Activated CD4-positive, alpha-beta memory T cell treated with anti-CD3 and anti-CD28 coated beads, Interleukin-2, amount 10 ng/mL, durations not matched to agents 7 days and 5 days (primary cell): ENCODE measurements at regions of chr3 and their contacts with region 1.

Region 1: GRCh38 chr3:113019182-113020137 is 28.7 kb downstream of the GTPBP8 start:
- DNase-seq: peak; percentile 86
- H3K4me3 Mint-ChIP-seq: peak overlapping the region; percentile 80
- H3K27ac Mint-ChIP-seq: peak overlapping the region; percentile 84
- H3K4me1 Mint-ChIP-seq: peaks cover 44% of the 10 kb centered on the region
- H3K27me3 Mint-ChIP-seq: no peaks in the 10 kb centered on the region

Region 2: DNA sequence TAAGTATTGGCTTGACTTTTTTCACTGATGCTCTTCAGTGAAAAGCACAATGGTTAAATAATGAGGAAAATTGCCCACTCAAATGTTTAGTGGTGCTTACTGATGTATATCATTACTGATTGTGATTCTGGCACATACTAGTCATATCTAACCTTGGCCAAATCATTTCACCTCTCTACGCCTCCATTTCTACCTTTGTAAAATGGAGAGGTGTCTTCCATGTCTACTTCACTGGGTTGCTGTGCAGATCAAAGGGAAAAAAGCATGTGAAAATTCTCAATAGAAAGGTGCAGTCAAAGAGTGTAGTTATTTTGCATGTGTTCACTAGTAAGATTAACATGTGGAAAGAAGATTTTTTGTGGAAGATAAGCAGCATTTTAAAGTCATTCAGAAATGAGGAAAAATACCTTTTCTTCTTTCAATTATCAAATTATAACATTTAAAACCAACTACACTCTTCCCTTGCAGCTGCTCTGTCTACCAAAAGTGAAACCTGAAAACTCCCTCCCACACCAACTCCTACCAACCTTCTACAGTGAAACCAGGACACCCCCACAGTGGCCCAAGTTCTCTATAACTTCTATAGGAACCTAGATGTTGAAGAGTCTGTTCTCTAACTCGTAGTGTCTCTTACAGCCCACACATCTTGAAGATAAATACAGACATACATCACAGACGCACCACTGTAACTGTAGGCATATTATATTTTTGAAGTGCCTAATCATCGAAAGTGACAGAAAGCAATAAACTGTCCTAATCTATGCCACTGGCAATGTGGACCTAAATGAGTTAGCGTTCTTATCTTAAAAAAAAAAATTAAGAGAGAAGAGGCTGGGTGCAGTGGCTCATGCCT is 45.9 kb before region 1 on chr3:
- CTCF ChIA-PET with region 1: interaction called, 8 read pairs
- POLR2A ChIA-PET with region 1: interaction called, 16 read pairs
- DNase-seq: peak; percentile 44
- H3K4me3 Mint-ChIP-seq: peak overlapping the region; percentile 97
- H3K27ac Mint-ChIP-seq: peak overlapping the region; percentile 83
- H3K4me1 Mint-ChIP-seq: peaks cover 76% of the 10 kb centered on the region
- H3K27me3 Mint-ChIP-seq: peaks cover 2% of the 10 kb centered on the region

Region 3: DNA sequence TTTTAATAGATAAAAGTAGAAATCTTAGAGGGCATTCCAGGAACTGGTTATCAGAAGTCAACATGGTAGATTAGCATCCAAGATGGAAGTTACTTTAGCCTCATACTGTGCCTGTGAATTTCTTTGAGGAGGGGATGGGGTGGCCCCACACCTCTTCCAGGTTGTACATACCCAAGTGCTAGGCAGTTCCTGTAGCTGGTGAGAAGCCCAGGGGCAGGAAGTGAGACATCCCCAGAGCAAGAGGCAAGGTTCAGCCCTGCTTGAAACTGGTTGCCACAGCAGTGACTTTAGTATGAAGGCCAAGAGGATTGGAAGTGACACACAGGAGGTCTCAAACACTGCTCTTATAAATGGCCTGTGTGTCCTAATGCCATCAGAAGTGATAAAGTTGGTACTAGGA is 16.8 kb before region 1 on chr3:
- CTCF ChIA-PET with region 1: interaction called, 5 read pairs
- POLR2A ChIA-PET with region 1: interaction called, 51 read pairs
- DNase-seq: peak; percentile 70
- H3K4me3 Mint-ChIP-seq: no peak overlapping the region
- H3K27ac Mint-ChIP-seq: peak overlapping the region; percentile 58
- H3K4me1 Mint-ChIP-seq: peaks cover 69% of the 10 kb centered on the region
- H3K27me3 Mint-ChIP-seq: no peaks in the 10 kb centered on the region

Region 4: GRCh38 chr3:113035387-113035982 is 16.0 kb after region 1 on chr3:
- CTCF ChIA-PET with region 1: interaction called, 20 read pairs
- POLR2A ChIA-PET with region 1: no interaction called
- DNase-seq: peak; percentile 32
- H3K4me3 Mint-ChIP-seq: no peak overlapping the region
- H3K27ac Mint-ChIP-seq: no peak overlapping the region
- H3K4me1 Mint-ChIP-seq: no peaks in the 10 kb centered on the region
- H3K27me3 Mint-ChIP-seq: no peaks in the 10 kb centered on the region